Mammary epithelial cell (primary cell): ENCODE measurements at regions of chr1 and their contacts with region 1.

Region 1: DNA sequence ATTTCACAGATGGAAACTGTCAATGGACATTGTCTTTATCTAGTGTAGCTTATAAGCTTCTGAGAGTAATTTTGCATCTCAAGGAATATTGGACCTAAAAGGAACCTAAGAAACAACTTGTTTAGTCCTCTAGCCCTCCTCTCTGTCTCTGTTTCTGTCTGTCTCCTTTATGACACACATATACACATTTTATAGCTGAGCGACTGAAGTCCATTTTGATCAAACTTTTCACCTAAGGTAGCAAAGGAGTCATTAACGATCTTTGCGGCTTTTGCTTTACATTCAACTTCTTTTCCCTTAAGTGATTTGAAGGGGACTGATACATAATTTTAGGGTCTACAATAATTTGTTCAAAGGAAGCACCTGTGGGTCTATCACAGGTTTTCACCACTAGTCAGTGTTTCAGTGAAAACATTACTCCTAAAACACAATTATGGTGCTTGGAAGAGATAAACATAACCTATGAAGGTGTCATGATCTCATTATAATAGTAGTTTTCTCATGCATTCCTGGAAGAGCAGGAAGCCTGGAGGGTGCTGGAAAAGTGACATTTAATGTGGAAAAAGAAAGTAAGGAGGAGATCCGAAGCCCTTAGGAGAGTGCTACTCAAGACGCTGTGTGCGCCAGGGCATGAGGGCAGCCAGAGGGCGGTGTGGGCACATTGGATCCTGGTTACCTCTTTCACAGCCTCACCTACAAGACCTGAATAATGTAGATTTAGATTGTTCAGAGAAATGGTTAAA is 248.6 kb downstream of the DNM3 start:
- DNase-seq: peak; percentile 53
- H3K4me3 ChIP-seq: no peak overlapping the region
- H3K27ac ChIP-seq: no peak overlapping the region
- H3K4me1 ChIP-seq: no peaks in the 10 kb centered on the region
- H3K27me3 ChIP-seq: no peaks in the 10 kb centered on the region
- CTCF ChIP-seq: peak; percentile 92 to 96

Region 2: GRCh38 chr1:172041742-172042141 is 48.2 kb before region 1 on chr1:
- CTCF ChIA-PET with region 1: no interaction called
- dilution Hi-C with region 1: no loop called
- in situ Hi-C with region 1: no loop called
- intact Hi-C with region 1: loop called (anchors 10 kb)
- DNase-seq: no peak
- H3K4me3 ChIP-seq: no peak overlapping the region
- H3K27ac ChIP-seq: no peak overlapping the region
- H3K4me1 ChIP-seq: peaks cover 19% of the 10 kb centered on the region
- H3K27me3 ChIP-seq: no peaks in the 10 kb centered on the region
- CTCF ChIP-seq: peak; percentile 35 to 49

Region 3: DNA sequence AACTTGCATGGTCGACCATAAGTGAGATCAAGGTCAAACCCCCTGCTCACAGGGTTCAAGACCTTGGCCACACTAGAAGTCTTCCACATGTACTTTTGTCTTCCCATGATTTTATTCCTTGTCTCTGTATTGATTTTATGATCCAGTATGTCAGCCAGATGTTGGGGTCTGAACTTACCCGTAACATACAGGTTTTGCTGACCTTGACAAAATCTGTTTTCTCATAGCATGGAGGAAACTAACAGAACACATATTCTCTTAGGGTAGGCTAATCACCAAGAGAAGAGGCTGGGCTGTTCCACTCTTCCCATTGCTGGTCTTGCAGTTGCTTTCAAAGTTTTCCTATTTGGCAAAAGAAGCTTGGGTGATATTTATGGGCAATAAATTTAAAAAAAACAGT is 35.3 kb after region 1 on chr1:
- CTCF ChIA-PET with region 1: interaction called, 11 read pairs
- dilution Hi-C with region 1: no loop called
- in situ Hi-C with region 1: no loop called
- intact Hi-C with region 1: no loop called
- DNase-seq: no peak
- H3K4me3 ChIP-seq: no peak overlapping the region
- H3K27ac ChIP-seq: no peak overlapping the region
- H3K4me1 ChIP-seq: no peaks in the 10 kb centered on the region
- H3K27me3 ChIP-seq: no peaks in the 10 kb centered on the region
- CTCF ChIP-seq: no peak

Region 4: GRCh38 chr1:172286629-172287076 is 196.7 kb after region 1 on chr1:
- CTCF ChIA-PET with region 1: no interaction called
- dilution Hi-C with region 1: no loop called
- in situ Hi-C with region 1: no loop called
- intact Hi-C with region 1: loop called (anchors 10 kb)
- DNase-seq: peak; percentile 84
- H3K4me3 ChIP-seq: no peak overlapping the region
- H3K27ac ChIP-seq: no peak overlapping the region
- H3K4me1 ChIP-seq: peaks cover 11% of the 10 kb centered on the region
- H3K27me3 ChIP-seq: no peaks in the 10 kb centered on the region
- CTCF ChIP-seq: peak in 1 of 2 donors; percentile 36

Region 5: DNA sequence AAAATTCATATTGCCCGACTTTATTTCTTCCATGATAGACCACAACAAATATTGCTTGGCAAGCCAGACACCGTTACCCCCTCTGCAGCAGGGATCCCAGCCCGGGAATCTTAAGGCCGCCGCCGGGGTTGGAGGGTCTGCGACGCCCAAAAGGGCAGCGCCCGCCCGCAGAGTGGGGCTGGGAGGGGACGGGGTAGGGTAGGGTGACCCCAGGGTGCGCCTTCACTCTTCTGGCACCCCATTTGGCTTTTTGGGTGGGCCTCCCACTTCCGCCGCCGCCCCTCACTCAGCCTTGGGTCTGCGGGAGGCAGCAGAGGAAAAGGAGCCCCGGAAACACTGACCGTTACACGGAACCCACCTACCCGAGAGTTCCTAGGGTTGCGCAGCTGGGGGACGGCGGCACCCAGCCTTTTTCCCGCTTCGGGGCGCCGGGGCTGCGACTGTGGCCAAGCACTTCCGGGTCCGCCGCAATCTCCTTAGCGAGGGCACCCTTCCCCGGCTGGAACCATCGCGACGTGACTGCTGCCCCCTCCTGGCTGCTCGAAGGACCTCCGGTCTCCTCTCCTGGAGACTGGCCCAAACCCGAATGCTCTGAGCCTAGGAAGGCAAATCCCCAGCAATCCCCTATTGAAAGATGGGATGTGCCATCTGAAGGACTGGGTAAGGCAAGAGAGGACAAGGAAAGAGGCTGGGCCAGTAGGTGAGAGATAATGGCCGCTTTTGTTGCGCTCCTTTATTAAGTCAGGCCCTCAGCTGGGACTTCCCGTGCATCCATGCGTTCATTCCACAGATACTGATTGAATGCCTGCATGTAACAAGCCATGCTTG is 353.9 kb after region 1 on chr1 and contains the start of gene PIGC:
- CTCF ChIA-PET with region 1: no interaction called
- dilution Hi-C with region 1: no loop called
- in situ Hi-C with region 1: no loop called
- intact Hi-C with region 1: loop called (anchors 1 kb)
- DNase-seq: peak; percentile 73
- H3K4me3 ChIP-seq: peak within 1 kb of the TSS; percentile 84 to 89 (median 89)
- H3K27ac ChIP-seq: peak within 1 kb of the TSS; percentile 74
- H3K4me1 ChIP-seq: peaks cover 27% of the 10 kb centered on the region
- H3K27me3 ChIP-seq: no peaks in the 10 kb centered on the region
- CTCF ChIP-seq: peak; percentile 74 to 94
- total RNA-seq, gene PIGC: 17.7 to 18.3 TPM